ENCODE measurements at regions of chr10 and their contacts with region 1.

Region 1: DNA sequence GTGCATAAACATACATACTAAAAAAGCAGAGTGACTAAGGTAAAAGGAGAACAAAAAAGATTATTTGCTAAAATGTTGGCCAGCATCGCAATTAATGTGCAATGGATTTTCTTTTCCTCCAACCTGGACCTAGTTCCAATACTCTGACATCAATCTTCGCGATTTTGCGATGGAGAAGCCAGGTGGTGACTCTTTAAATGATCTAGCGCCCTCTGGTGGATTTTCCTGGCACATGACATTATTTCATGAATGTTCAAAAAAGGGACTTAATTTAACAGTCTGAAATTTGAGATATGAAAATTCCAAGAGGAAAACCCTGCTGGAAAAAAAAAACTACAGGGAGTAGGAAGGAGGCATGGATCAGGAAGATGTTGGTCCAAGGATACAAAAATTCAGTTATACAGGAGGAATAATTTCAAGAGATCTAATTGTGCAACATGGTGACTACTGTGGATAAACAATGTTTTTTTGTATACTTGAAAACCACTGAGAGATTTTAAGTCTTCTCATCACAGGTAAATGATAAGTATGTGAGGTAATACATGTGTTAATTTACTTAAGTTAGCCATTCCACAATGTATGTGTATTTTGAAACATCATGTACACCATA is 4.3 kb upstream of the KCNMA1 start:
- DNase-seq: peak; percentile 84
- ATAC-seq: 0 out of 2 replicates have a peak, but pooled peaks have one; percentile 20
- H3K4me3 ChIP-seq: no peak overlapping the region
- H3K27ac ChIP-seq: peak overlapping the region; percentile 13; the same call in 1 of the 2 replicates
- H3K4me1 ChIP-seq: peaks cover 13% of the 10 kb centered on the region
- H3K27me3 ChIP-seq: no peaks in the 10 kb centered on the region
- CTCF ChIP-seq: peak; percentile 89

Region 2: DNA sequence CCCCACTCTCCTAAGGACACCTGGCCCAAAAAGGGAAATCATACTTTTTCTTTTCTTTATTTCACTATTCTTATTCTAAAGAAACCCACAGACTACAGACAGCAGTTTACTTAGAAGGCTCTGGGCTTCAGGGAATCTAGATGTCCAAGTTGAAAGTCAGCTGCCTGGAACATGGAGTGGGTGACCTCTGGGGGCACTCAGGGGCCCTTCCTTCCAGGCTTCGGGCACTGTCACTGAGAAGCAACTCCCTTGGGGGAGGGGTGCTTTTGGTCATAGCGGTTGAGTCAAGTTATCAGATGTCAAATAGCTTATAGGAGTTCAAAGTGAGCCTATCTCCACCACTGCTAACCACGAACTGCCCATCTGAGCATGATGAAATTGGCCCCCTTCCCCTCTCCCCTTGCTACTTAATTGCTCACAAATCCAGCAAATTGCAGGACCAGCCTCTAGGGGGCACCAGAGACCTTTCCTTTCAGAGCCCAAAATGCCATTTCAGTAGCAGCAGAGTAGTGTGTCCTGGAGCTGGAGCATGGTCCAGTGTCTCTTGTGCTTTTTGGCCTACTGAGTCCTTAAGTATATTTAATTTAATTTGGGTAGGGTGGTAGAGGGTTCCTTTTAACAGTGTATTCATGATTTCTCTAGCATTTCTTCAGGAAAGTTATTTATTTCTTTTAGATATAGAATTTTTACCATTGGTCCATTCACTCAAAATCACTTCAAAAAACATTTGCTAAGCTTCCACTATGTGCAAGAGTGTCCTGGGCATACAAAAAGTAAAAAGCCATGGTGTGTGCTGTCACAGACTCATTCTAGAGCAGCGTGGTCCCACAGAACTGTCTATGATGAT is 468.1 kb before region 1 on chr10:
- CTCF ChIA-PET with region 1: interaction called, 5 read pairs
- POLR2A ChIA-PET with region 1: no interaction called
- in situ Hi-C with region 1: no loop called
- intact Hi-C with region 1: loop called (anchors 2 kb)
- DNase-seq: no peak
- ATAC-seq: peak; percentile 86
- H3K4me3 ChIP-seq: no peak overlapping the region
- H3K27ac ChIP-seq: peak overlapping the region; percentile 51; the same call in 1 of the 2 replicates
- H3K4me1 ChIP-seq: peaks cover 4% of the 10 kb centered on the region; the same call in 1 of the 2 replicates
- H3K27me3 ChIP-seq: no peaks in the 10 kb centered on the region
- CTCF ChIP-seq: peak; percentile 97

Region 3: GRCh38 chr10:77355844-77356243 is 286.0 kb before region 1 on chr10:
- CTCF ChIA-PET with region 1: no interaction called
- POLR2A ChIA-PET with region 1: no interaction called
- in situ Hi-C with region 1: no loop called
- intact Hi-C with region 1: no loop called
- DNase-seq: peak; percentile 86
- ATAC-seq: peak; percentile 82
- H3K4me3 ChIP-seq: no peak overlapping the region
- H3K27ac ChIP-seq: peak overlapping the region; percentile 46
- H3K4me1 ChIP-seq: peaks cover 25% of the 10 kb centered on the region
- H3K27me3 ChIP-seq: no peaks in the 10 kb centered on the region
- CTCF ChIP-seq: no peak

Region 4: GRCh38 chr10:77391605-77392235 is 250.2 kb before region 1 on chr10:
- CTCF ChIA-PET with region 1: interaction called, 8 read pairs
- POLR2A ChIA-PET with region 1: no interaction called
- in situ Hi-C with region 1: no loop called
- intact Hi-C with region 1: loop called (anchors 5 kb)
- DNase-seq: peak; percentile 67
- ATAC-seq: peak; percentile 60
- H3K4me3 ChIP-seq: no peak overlapping the region
- H3K27ac ChIP-seq: peak overlapping the region; percentile 78
- H3K4me1 ChIP-seq: peaks cover 63% of the 10 kb centered on the region
- H3K27me3 ChIP-seq: no peaks in the 10 kb centered on the region
- CTCF ChIP-seq: peak; percentile 93

Region 5: DNA sequence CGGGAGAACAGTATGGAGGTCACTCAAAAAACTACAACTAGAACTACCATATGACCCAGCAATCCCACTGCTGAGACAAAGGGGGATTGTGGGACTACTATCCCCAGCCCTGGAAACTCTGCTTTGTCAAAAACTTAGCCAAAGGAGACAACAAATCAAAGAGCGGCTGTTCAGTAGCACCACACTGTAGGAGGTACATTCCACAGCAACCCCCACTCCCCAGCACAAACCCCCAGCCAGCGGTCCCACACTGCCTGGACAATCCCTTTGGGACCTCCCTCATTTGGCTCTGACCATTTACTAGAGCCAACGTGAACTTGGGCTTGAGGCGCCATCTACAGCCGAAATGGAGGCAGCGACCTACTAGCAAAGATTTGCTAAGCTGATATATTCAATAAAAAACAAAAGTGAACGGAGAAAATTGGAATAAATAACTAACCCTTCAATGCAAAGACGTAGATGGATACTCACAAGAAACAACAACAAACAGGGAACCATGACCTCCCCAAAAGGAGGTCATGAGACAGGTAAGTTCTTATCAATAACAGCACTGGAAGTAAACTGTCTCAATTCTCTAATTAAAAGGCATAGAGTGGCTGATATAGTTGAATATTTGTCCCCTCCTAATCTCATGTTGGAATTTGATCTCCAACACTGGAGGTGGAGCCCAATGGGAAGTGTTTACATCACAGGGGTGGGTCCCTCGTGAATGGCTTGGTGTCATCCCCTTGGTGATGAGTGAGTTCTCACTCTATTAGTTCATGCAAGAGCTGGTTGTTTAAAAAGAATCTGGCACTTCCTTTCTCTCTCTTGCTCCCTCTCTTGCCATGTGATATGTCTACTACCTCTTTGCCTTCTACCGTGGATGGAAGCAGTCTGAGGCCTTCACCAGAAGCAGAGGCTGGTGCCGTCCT is 114.7 kb after region 1 on chr10:
- CTCF ChIA-PET with region 1: interaction called, 5 read pairs
- POLR2A ChIA-PET with region 1: no interaction called
- in situ Hi-C with region 1: no loop called
- intact Hi-C with region 1: loop called (anchors 2 kb)
- DNase-seq: peak; percentile 18
- ATAC-seq: peak; percentile 96
- H3K4me3 ChIP-seq: no peak overlapping the region
- H3K27ac ChIP-seq: no peak overlapping the region
- H3K4me1 ChIP-seq: no peaks in the 10 kb centered on the region
- H3K27me3 ChIP-seq: no peaks in the 10 kb centered on the region
- CTCF ChIP-seq: peak; percentile 93